Right lobe of liver (tissue), 6 donors: ENCODE measurements at regions of chr10 and their contacts with region 1.

Region 1: DNA sequence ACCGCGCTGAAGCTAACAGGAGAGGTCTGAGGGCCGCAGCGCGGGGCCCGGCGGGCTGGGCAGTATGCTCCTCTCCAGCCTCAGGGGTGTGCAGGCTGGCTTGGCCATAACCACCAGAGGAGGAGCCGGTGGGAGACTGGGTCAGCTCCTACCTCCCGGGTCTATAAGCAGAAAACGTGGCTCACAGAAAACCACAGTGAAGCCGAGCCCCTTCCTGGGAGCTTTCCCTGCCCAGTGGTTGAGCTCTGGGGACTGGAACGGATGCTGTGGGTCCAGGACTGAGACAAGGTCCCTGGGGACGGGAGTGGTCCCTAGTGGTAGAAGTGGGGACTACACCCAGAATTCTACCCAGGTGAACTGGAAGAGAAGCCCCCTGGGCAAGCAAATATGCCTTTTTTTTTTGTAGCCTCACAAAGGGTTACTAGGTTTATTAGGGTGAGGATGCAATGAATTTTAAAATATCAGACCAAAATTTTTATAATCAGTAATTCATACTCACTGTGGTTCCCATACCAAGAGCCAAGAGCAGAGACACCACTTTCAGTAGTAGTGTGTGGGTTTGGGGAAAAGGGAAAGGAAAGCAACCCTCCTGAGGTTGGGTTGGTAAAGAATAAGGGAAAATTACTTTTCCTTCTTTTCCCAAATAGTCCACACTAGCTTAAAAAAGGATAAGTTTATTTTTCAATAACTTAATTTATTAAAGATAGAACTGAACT is 67.9 kb upstream of the PRKCQ start:
- DNase-seq: peak in 2 of 3 donors; percentile 39 to 52
- ATAC-seq: peak; percentile 81 to 98 (median 90)
- H3K4me3 ChIP-seq: no peak overlapping the region
- H3K27ac ChIP-seq: no peak overlapping the region
- H3K4me1 ChIP-seq: no peaks in the 10 kb centered on the region
- H3K27me3 ChIP-seq: no peaks in the 10 kb centered on the region
- CTCF ChIP-seq: peak; percentile 40 to 77 (median 72)
- POLR2A ChIP-seq: no peak

Region 2: DNA sequence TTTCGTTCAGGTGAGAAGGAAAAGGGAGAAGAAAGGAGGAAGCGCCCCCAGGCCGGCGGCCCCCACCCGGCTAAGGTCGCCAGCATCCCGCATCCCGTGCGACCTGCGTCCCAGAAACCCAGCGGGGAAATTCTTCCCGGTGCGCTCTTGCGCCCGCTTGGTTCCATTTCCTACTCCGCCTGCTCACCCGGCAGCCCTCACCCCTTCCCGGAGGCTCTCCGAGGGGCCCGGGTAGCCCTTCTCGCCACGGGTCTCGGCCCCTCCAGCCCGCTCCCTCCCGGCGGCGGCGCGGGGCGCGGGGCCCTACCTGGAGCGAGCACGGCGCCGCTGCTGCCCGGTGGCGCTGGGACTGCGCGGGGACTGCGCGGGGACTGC is 68.1 kb before region 1 on chr10 and contains the start of gene PRKCQ:
- intact Hi-C with region 1: loop called in 1 of 2 experiments (anchors 10 kb)
- DNase-seq: peak in 2 of 3 donors; percentile 47 to 50
- ATAC-seq: peak; percentile 38 to 61 (median 56)
- H3K4me3 ChIP-seq: peak within 1 kb of the TSS; percentile 67 to 76 (median 73)
- H3K27ac ChIP-seq: peak within 1 kb of the TSS; percentile 62 to 76 (median 66)
- H3K4me1 ChIP-seq: no peaks in the 10 kb centered on the region
- H3K27me3 ChIP-seq: no peaks in the 10 kb centered on the region
- CTCF ChIP-seq: no peak
- POLR2A ChIP-seq: no peak
- total RNA-seq, gene PRKCQ: 0.12 to 0.60 (median 0.16) TPM